ENCODE measurements at regions of chr16 and their contacts with region 1.

Region 1: GRCh38 chr16:56964243-56965148 is 2.7 kb downstream of the CETP start:
- DNase-seq: peak; percentile 97
- H3K4me3 Mint-ChIP-seq: no peak overlapping the region
- H3K27ac Mint-ChIP-seq: peak overlapping the region; percentile 11
- H3K4me1 Mint-ChIP-seq: peaks cover 19% of the 10 kb centered on the region
- H3K27me3 Mint-ChIP-seq: no peaks in the 10 kb centered on the region

Region 2: DNA sequence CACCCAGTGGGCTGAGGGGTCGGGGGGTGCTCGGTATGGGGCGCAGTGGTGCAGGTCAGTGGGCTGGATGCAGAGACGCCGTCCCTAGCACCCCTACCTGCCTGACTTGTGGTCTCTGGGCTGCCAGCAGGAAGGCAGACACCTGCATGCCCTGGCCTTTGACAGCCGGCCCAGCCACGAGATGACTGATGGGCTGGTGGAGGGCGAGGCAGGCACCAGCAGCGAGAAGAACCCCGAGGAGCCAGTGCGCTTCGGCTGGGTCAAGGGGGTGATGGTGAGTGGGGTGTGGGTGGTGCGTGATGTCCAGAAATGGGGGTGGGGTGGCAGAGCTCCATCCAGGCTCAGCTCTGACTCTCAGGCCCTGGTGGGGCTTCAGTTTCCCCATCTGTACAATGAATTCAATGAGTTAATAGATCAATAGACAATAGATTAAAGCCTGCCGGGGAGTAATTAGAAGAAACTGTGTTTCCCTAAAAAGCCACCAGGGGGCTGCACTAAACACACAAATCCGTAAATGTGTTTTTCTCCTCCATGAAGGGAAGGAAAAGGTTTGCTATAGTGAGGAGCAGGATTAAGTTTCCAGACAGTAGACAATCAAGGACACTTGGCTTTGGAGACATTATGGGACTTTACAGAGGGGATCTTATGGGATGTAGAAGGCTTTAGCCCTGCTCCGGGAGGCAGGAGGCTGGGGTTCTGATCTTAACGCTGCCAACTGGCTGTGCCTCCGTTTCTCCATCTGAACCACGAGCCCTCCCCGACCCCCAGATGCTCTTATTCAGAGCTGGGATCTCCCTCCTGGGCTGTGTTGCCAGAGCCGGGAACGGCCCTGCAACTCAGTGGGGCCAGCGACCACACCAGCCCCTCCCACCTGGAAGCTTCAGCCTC is 97.3 kb before region 1 on chr16:
- CTCF ChIA-PET with region 1: interaction called, 13 read pairs
- POLR2A ChIA-PET with region 1: no interaction called
- intact Hi-C with region 1: no loop called
- DNase-seq: peak; percentile 48
- H3K4me3 Mint-ChIP-seq: no peak overlapping the region
- H3K27ac Mint-ChIP-seq: no peak overlapping the region
- H3K4me1 Mint-ChIP-seq: peaks cover 10% of the 10 kb centered on the region
- H3K27me3 Mint-ChIP-seq: no peaks in the 10 kb centered on the region

Region 3: DNA sequence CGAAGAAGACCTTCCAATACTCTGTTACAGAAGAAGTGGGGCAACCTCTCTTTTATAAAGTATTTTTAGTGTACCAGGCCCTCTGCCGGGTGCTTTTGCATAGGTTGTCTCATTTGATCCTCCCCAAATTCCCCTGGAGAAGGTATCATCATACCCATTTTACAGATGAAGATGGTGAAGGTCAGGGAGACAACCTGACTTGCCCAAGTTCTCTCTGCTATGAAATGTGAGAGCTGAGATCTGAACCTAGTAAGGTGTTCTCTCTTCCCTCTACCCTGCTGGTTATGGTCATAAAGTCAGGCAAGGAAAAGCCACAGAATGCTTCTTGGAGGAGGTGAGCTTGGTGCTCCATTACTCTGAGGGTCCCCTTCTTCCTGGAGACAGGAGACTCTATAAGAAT is 60.6 kb before region 1 on chr16:
- CTCF ChIA-PET with region 1: no interaction called
- POLR2A ChIA-PET with region 1: no interaction called
- intact Hi-C with region 1: no loop called
- DNase-seq: no peak
- H3K4me3 Mint-ChIP-seq: no peak overlapping the region
- H3K27ac Mint-ChIP-seq: no peak overlapping the region
- H3K4me1 Mint-ChIP-seq: peaks cover 11% of the 10 kb centered on the region
- H3K27me3 Mint-ChIP-seq: peaks cover 4% of the 10 kb centered on the region

Region 4: DNA sequence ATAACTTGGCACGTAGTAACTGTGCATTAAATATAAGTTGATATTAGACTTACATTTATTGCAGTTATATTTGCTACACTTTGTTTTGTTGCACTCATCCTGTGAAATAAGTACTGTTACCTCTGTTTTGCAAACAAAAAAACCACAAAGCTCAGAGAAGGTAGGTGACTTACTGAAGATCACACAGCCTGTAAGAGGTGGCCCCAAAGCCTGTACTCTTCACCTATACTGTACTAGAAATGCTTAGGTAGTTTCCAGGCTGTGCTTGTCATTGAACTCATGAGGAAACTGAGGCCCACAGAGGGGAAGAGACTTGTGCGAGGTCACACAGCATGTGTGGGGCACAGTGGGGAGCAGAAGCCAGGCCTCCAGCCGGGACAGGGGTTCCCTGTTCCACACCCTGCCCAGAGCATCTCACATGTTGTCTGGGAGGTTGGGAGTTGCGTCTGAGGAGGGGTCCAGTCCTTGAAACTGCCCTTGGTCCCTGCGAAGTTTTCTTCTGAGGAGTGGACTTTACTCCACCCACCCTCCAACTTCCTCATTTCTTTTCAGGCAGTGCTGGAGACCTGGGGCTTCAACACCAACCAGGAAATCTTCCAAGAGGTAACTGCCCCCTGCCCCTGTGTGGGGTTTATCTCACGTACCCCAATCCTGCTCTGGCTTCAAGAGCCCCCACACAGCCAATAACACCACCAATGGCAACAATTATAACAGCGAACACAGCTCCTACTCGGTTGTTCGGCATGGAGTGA is 10.2 kb after region 1 on chr16:
- CTCF ChIA-PET with region 1: interaction called, 40 read pairs
- POLR2A ChIA-PET with region 1: no interaction called
- intact Hi-C with region 1: no loop called
- DNase-seq: no peak
- H3K4me3 Mint-ChIP-seq: no peak overlapping the region
- H3K27ac Mint-ChIP-seq: no peak overlapping the region
- H3K4me1 Mint-ChIP-seq: peaks cover 26% of the 10 kb centered on the region
- H3K27me3 Mint-ChIP-seq: no peaks in the 10 kb centered on the region

Region 5: GRCh38 chr16:57007530-57007929 is 43.0 kb after region 1 on chr16:
- CTCF ChIA-PET with region 1: interaction called, 14 read pairs
- POLR2A ChIA-PET with region 1: no interaction called
- intact Hi-C with region 1: no loop called
- DNase-seq: no peak
- H3K4me3 Mint-ChIP-seq: no peak overlapping the region
- H3K27ac Mint-ChIP-seq: peak overlapping the region; percentile 51
- H3K4me1 Mint-ChIP-seq: peaks cover 82% of the 10 kb centered on the region
- H3K27me3 Mint-ChIP-seq: no peaks in the 10 kb centered on the region

Region 6: GRCh38 chr16:57029161-57030160 is 65.0 kb after region 1 on chr16:
- CTCF ChIA-PET with region 1: interaction called, 14 read pairs
- POLR2A ChIA-PET with region 1: no interaction called
- intact Hi-C with region 1: no loop called
- DNase-seq: peak; percentile 38
- H3K4me3 Mint-ChIP-seq: no peak overlapping the region
- H3K27ac Mint-ChIP-seq: peak overlapping the region; percentile 66
- H3K4me1 Mint-ChIP-seq: peaks cover 75% of the 10 kb centered on the region
- H3K27me3 Mint-ChIP-seq: no peaks in the 10 kb centered on the region

Region 7: DNA sequence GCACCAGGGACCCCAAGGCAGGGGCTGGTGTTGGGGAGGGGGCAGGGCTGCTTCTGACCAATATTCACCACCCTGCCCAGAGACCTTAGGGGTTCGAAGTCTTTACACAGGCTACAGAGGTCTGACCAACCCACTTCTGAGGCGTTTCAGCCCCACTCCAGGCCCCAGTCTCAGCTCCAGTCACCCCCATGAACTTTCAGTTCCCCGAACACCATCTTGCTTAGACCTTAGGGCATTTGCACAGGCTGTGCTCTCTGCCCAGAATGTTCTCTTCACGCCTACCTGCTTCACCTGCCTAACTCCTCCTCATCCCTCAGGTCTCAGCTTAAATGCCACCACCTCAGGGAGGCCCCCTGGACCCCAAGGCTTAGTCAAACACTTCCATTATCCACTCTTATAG is 102.1 kb after region 1 on chr16:
- CTCF ChIA-PET with region 1: interaction called, 15 read pairs
- POLR2A ChIA-PET with region 1: no interaction called
- intact Hi-C with region 1: no loop called
- DNase-seq: no peak
- H3K4me3 Mint-ChIP-seq: no peak overlapping the region
- H3K27ac Mint-ChIP-seq: peak overlapping the region; percentile 31
- H3K4me1 Mint-ChIP-seq: peaks cover 8% of the 10 kb centered on the region
- H3K27me3 Mint-ChIP-seq: no peaks in the 10 kb centered on the region

Region 8: GRCh38 chr16:57167953-57168352 is 203.5 kb after region 1 on chr16:
- CTCF ChIA-PET with region 1: interaction called, 11 read pairs
- POLR2A ChIA-PET with region 1: no interaction called
- intact Hi-C with region 1: loop called (anchors 1 kb)
- DNase-seq: no peak
- H3K4me3 Mint-ChIP-seq: no peak overlapping the region
- H3K27ac Mint-ChIP-seq: no peak overlapping the region
- H3K4me1 Mint-ChIP-seq: peaks cover 3% of the 10 kb centered on the region
- H3K27me3 Mint-ChIP-seq: no peaks in the 10 kb centered on the region

Region 9: GRCh38 chr16:57444711-57445110 is 480.2 kb after region 1 on chr16:
- CTCF ChIA-PET with region 1: no interaction called
- POLR2A ChIA-PET with region 1: no interaction called
- intact Hi-C with region 1: no loop called
- DNase-seq: no peak
- H3K4me3 Mint-ChIP-seq: no peak overlapping the region
- H3K27ac Mint-ChIP-seq: no peak overlapping the region
- H3K4me1 Mint-ChIP-seq: peaks cover 28% of the 10 kb centered on the region
- H3K27me3 Mint-ChIP-seq: no peaks in the 10 kb centered on the region